ENCODE measurements at regions of chr18 and their contacts with region 1.

Region 1: GRCh38 chr18:830315-830901 is 18.4 kb upstream of the YES1 start:
- H3K4me3 ChIP-seq: no peak overlapping the region
- H3K27ac ChIP-seq: no peak overlapping the region
- H3K4me1 ChIP-seq: no peaks in the 10 kb centered on the region; the same call in 1 of the 2 replicates
- CTCF ChIP-seq: no peak

Region 2: DNA sequence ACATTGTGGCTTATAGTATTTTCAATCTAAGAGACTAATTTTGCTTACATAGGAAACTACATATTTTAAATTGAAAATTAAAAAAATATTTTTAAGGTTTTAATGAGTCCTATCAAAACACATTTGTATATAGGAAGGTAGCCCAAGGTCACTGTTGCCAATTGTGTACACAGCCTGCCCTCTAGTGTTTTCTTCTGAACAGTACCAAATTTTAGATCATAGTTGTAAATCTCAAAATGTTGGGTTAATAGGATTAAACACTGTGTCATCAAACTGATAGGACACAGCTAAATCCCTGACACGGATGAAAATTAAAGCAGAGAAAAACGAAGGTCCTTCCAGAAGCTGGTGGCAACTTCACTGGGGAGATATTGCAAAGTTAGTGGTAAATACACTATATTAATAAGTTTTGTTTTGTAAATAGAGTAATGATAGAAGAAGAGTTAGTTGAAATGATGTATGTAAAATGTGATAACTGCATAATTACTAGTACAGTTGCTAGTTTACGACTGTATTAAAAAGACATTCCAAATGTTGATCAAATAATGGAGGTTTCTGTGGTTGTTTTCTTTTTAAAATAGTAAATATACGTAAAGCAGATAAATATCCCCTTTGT is 213.9 kb before region 1 on chr18:
- CTCF ChIA-PET with region 1: interaction called, 184 read pairs
- POLR2A ChIA-PET with region 1: no interaction called
- H3K4me3 ChIP-seq: no peak overlapping the region
- H3K27ac ChIP-seq: no peak overlapping the region
- H3K4me1 ChIP-seq: no peaks in the 10 kb centered on the region
- CTCF ChIP-seq: peak; percentile 37; the same call in 1 of the 2 replicates

Region 3: GRCh38 chr18:677951-678381 is 152.4 kb before region 1 on chr18:
- CTCF ChIA-PET with region 1: interaction called, 19 read pairs
- POLR2A ChIA-PET with region 1: no interaction called
- H3K4me3 ChIP-seq: no peak overlapping the region
- H3K27ac ChIP-seq: no peak overlapping the region
- H3K4me1 ChIP-seq: no peaks in the 10 kb centered on the region
- CTCF ChIP-seq: no peak

Region 4: DNA sequence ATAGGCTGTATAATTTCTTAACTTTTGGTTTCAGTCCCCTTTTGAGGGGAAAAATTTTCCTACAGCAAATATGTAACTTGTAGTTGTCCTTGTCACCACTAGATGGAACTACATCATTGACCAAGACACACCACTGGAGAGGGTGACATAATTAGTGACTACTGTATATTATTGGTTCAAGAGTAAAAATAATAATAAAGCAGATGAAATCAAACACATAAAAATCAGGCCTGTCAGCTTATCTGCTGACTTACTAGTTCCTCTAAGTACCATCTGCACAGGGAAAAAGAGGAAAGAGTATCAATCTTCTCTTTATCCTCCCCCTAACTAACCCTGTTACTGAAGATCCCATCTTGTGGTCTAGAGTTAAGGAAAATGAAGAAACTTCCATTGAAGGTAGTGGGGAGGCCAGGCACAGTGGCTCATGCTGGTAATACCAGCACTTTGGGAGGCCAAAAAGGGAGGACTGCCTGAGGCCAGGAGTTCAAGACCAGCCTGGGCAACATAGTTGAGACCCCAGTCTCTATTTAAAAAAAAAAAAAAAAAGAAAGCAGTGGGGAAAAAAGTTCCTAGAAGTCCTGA is 88.4 kb before region 1 on chr18:
- CTCF ChIA-PET with region 1: interaction called, 230 read pairs
- POLR2A ChIA-PET with region 1: interaction called, 3 read pairs
- H3K4me3 ChIP-seq: no peak overlapping the region
- H3K27ac ChIP-seq: no peak overlapping the region
- H3K4me1 ChIP-seq: no peaks in the 10 kb centered on the region
- CTCF ChIP-seq: peak; percentile 65; the same call in 1 of the 2 replicates

Region 5: GRCh38 chr18:785242-785641 is 45.2 kb before region 1 on chr18:
- CTCF ChIA-PET with region 1: interaction called, 11 read pairs
- POLR2A ChIA-PET with region 1: interaction called, 3 read pairs
- H3K4me3 ChIP-seq: no peak overlapping the region
- H3K27ac ChIP-seq: no peak overlapping the region
- H3K4me1 ChIP-seq: no peaks in the 10 kb centered on the region
- CTCF ChIP-seq: no peak

Region 6: DNA sequence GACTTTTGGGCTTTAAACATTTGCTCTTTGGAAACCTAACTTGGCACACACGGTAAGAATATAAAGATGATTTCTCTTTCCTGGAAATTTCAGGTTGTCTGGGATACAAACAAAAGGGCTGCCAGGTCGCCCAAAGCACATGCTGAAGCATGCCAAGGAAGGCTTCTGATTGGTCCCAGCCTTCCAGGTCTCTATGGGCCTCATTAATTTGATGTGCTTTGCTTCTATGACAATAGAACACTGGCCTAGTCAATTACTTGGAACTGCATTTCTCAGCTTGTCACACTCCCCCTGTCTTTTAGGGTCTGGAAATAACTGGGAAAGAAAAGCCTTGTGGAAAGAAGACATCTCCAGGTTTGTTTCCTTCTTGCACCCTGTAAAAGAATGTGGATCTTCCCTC is 303.1 kb after region 1 on chr18:
- CTCF ChIA-PET with region 1: no interaction called
- POLR2A ChIA-PET with region 1: no interaction called
- H3K4me3 ChIP-seq: no peak overlapping the region
- H3K27ac ChIP-seq: no peak overlapping the region
- H3K4me1 ChIP-seq: no peaks in the 10 kb centered on the region
- CTCF ChIP-seq: no peak